Psoas muscle (tissue), 8 donors: ENCODE measurements at regions of chr1 and their contacts with region 1.

Region 1: GRCh38 chr1:53190210-53190611 is 6.4 kb upstream of the CPT2 start:
- DNase-seq: no peak
- ATAC-seq: no peak
- H3K4me3 ChIP-seq: no peak overlapping the region
- H3K27ac ChIP-seq: no peak overlapping the region
- H3K4me1 ChIP-seq: peaks cover under 1% of the 10 kb centered on the region
- H3K27me3 ChIP-seq: no peaks in the 10 kb centered on the region
- CTCF ChIP-seq: no peak

Region 2: DNA sequence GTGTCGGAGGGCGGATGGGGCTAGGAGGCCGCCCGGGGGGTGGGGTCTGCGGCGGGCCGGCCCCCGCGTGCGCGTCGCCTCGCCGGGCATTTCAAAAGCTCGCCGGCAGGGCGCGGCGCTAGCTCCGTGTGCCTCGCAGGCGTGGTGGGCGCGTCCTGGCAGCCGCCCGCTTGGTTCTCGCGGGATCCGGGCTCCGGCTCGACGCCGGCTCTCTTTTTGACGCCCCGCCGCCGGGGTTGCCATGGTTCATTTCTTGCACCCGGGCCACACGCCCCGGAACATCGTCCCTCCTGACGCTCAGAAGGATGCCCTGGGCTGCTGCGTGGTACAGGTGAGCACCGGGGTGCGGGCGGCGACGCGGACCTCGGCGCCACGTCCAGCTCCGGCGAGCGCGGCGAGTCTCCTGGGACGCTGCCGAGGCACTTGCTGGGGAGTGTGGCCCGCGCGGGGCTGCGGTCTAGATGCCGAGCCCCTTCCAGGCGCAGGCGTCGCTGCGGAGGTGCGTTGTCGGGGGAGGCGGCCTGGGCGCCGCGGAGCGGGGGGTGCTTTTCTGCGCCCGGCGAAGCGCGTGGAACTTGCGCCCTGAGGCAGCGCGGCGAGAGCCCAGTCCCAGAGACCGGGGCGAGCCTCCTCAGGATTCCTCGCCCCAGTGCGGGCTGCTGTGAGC is 347.4 kb before region 1 on chr1 and contains the start of gene ZYG11A:
- intact Hi-C with region 1: loop called in 1 of 2 experiments (anchors 5 kb)
- DNase-seq: peak; percentile 59 to 74
- ATAC-seq: peak; percentile 61 to 90 (median 88)
- H3K4me3 ChIP-seq: peak within 1 kb of the TSS; percentile 63
- H3K27ac ChIP-seq: no peak within 1 kb of the TSS
- H3K4me1 ChIP-seq: peaks cover 8% of the 10 kb centered on the region
- H3K27me3 ChIP-seq: peaks cover 0 to 47% (median 11%) of the 10 kb centered on the region in 3 donors
- CTCF ChIP-seq: peak; percentile 29
- total RNA-seq, gene ZYG11A: 0.13 TPM in 1 of 4 donors, not detected in the others